ENCODE measurements at regions of chr3 and their contacts with region 1.

Region 1: GRCh38 chr3:149936812-149937233 is 33.9 kb downstream of the PFN2 start:
- DNase-seq: peak; percentile 51
- ATAC-seq: peak; percentile 69
- H3K4me3 Mint-ChIP-seq: no peak overlapping the region
- H3K27ac Mint-ChIP-seq: no peak overlapping the region
- H3K4me1 Mint-ChIP-seq: peaks cover 17% of the 10 kb centered on the region
- H3K27me3 Mint-ChIP-seq: no peaks in the 10 kb centered on the region
- CTCF ChIP-seq: peak; percentile 58

Region 2: GRCh38 chr3:149898771-149899170 is 38.1 kb before region 1 on chr3:
- CTCF ChIA-PET with region 1: no interaction called
- POLR2A ChIA-PET with region 1: no interaction called
- intact Hi-C with region 1: no loop called
- DNase-seq: no peak
- ATAC-seq: no peak
- H3K4me3 Mint-ChIP-seq: no peak overlapping the region
- H3K27ac Mint-ChIP-seq: no peak overlapping the region
- H3K4me1 Mint-ChIP-seq: no peaks in the 10 kb centered on the region
- H3K27me3 Mint-ChIP-seq: no peaks in the 10 kb centered on the region
- CTCF ChIP-seq: no peak

Region 3: DNA sequence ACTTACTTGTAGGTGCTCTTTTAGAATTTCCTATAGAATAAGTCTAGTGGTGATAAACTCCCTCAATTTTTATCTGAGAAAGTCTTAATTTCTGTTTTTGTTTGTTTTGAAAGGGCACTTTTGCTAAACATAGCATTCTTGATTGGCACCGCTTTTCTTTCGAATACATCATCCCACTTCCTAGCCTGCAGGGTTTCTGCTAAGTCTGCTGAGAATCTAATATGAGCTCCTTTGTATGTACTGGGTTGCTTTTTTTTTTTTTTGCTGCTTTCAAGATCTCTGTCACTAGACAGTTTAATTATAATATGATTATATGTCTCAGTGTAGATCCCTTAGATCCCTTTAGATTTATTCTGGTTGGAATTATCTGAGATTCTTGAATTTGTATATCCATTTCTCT is 12.4 kb after region 1 on chr3:
- CTCF ChIA-PET with region 1: interaction called, 13 read pairs
- POLR2A ChIA-PET with region 1: no interaction called
- intact Hi-C with region 1: no loop called
- DNase-seq: no peak
- ATAC-seq: no peak
- H3K4me3 Mint-ChIP-seq: no peak overlapping the region
- H3K27ac Mint-ChIP-seq: no peak overlapping the region
- H3K4me1 Mint-ChIP-seq: peaks cover 17% of the 10 kb centered on the region
- H3K27me3 Mint-ChIP-seq: no peaks in the 10 kb centered on the region
- CTCF ChIP-seq: no peak

Region 4: GRCh38 chr3:149958171-149958796 is 21.5 kb after region 1 on chr3:
- CTCF ChIA-PET with region 1: interaction called, 11 read pairs
- POLR2A ChIA-PET with region 1: no interaction called
- intact Hi-C with region 1: no loop called
- DNase-seq: no peak
- ATAC-seq: no peak
- H3K4me3 Mint-ChIP-seq: no peak overlapping the region
- H3K27ac Mint-ChIP-seq: no peak overlapping the region
- H3K4me1 Mint-ChIP-seq: peaks cover 19% of the 10 kb centered on the region
- H3K27me3 Mint-ChIP-seq: no peaks in the 10 kb centered on the region
- CTCF ChIP-seq: no peak

Region 5: DNA sequence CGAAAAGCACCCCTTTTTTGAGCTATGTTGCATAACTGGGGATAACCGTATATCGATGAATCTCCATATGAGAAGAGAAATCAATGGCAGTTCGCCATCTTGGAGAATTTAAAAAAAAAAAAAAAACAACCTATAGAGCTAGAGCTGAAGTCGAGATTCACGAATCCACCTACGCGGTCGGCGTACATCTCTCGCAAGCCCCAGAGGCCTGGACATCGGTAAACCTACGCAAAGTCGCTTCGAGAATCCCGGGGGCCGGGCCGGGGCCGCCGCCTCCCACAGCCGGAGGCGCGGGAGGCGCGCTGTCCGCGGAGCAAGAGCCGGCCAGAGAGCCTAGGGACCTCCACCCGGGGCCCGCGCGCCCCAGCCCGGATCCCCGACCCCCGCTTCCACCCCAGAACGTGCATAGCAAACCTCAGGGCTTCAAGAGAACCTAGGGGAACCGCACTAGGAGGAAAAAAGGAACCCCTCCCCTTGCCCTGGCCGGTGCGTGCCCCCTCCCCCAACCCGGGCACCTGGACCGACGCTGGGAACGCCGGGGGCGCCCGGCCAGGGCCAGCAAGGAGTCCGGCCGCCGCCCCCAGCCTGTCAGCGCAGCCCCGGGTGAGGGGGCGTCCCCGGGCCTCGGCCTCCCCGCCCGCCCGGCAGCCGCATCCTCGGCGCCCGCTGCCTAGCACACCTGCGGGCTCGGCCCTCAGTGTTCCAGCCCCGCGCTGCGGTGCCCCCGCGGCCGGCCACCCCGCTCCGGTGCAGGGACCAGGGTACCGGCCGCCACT is 33.3 kb after region 1 on chr3:
- CTCF ChIA-PET with region 1: interaction called, 25 read pairs
- POLR2A ChIA-PET with region 1: no interaction called
- intact Hi-C with region 1: no loop called
- DNase-seq: peak; percentile 89
- ATAC-seq: peak; percentile 74
- H3K4me3 Mint-ChIP-seq: peak overlapping the region; percentile 84
- H3K27ac Mint-ChIP-seq: peak overlapping the region; percentile 59
- H3K4me1 Mint-ChIP-seq: peaks cover 16% of the 10 kb centered on the region
- H3K27me3 Mint-ChIP-seq: peaks cover 18% of the 10 kb centered on the region
- CTCF ChIP-seq: no peak

Region 6: GRCh38 chr3:150183678-150184425 is 247.0 kb after region 1 on chr3:
- CTCF ChIA-PET with region 1: interaction called, 23 read pairs
- POLR2A ChIA-PET with region 1: no interaction called
- intact Hi-C with region 1: no loop called
- DNase-seq: peak; percentile 63
- ATAC-seq: peak; percentile 88
- H3K4me3 Mint-ChIP-seq: no peak overlapping the region
- H3K27ac Mint-ChIP-seq: no peak overlapping the region
- H3K4me1 Mint-ChIP-seq: no peaks in the 10 kb centered on the region
- H3K27me3 Mint-ChIP-seq: peaks cover 3% of the 10 kb centered on the region
- CTCF ChIP-seq: peak; percentile 62

Region 7: GRCh38 chr3:150220799-150221198 is 284.0 kb after region 1 on chr3:
- CTCF ChIA-PET with region 1: interaction called, 14 read pairs
- POLR2A ChIA-PET with region 1: no interaction called
- intact Hi-C with region 1: no loop called
- DNase-seq: no peak
- ATAC-seq: no peak
- H3K4me3 Mint-ChIP-seq: no peak overlapping the region
- H3K27ac Mint-ChIP-seq: no peak overlapping the region
- H3K4me1 Mint-ChIP-seq: peaks cover 2% of the 10 kb centered on the region
- H3K27me3 Mint-ChIP-seq: peaks cover 29% of the 10 kb centered on the region
- CTCF ChIP-seq: no peak